CD4-positive, alpha-beta T cell (primary cell): ENCODE measurements at regions of chr6 and their contacts with region 1.

Region 1: GRCh38 chr6:119110601-119111548 is 32.4 kb upstream of the FAM184A start:
- DNase-seq: peak in 11 of 14 experiments; percentile 6 to 82 (median 26)
- ATAC-seq: peak; percentile 91
- H3K4me3 ChIP-seq: no peak overlapping the region
- H3K4me3 Mint-ChIP-seq: peak overlapping the region; percentile 30
- H3K27ac ChIP-seq: no peak overlapping the region
- H3K27ac Mint-ChIP-seq: no peak overlapping the region
- H3K4me1 ChIP-seq: peaks cover 9% of the 10 kb centered on the region
- H3K4me1 Mint-ChIP-seq: peaks cover 13% of the 10 kb centered on the region
- H3K27me3 ChIP-seq: no peaks in the 10 kb centered on the region
- H3K27me3 Mint-ChIP-seq: no peaks in the 10 kb centered on the region
- CTCF ChIP-seq: peak; percentile 72

Region 2: DNA sequence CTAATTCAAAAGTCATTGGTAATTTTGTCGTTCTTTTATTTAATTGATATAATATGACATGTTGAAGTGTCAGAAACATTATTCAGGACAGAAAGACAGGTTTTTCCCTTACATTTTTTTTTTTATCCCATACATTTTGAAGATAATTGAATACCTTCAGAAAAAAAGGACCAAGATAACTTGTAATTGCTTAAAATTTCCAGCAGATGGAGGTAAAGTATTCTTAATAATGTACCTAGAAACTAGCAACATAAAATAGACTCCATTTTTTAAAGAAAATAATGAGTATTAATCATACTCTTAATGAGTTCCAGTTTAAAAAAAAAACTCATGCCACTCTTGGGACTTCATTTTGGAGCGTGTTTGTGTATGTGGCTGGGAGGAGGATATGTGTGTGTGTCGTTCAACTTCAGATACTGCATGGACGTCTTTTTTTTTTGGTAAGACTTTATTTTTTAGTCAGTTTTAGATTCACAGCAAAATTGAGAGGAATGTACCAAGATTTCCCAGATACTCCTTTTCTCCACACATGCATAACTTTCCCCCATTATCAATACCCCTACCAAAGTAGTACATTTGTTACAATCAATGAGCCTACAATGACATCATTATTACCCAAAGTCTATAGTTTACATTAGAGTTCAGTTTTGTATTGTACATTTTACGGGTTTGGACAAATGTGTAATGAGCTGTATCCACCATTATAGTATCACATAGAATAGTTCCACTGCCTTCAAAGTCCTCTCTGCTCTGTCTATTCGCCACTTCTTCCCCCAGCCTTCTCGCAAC is 1764.5 kb before region 1 on chr6:
- CTCF ChIA-PET with region 1: no interaction called
- POLR2A ChIA-PET with region 1: no interaction called
- intact Hi-C with region 1: loop called in 1 of 2 experiments (anchors 10 kb)
- DNase-seq: peak in 3 of 14 experiments; percentile 16 to 30 (median 19)
- ATAC-seq: no peak
- H3K4me3 ChIP-seq: no peak overlapping the region
- H3K4me3 Mint-ChIP-seq: no peak overlapping the region
- H3K27ac ChIP-seq: no peak overlapping the region
- H3K27ac Mint-ChIP-seq: no peak overlapping the region
- H3K4me1 ChIP-seq: no peaks in the 10 kb centered on the region
- H3K4me1 Mint-ChIP-seq: no peaks in the 10 kb centered on the region
- H3K27me3 ChIP-seq: peaks cover 0 to 4% of the 10 kb centered on the region in 2 experiments
- H3K27me3 Mint-ChIP-seq: peaks cover 4% of the 10 kb centered on the region
- CTCF ChIP-seq: peak; percentile 65

Region 3: GRCh38 chr6:118283766-118284165 is 827.1 kb before region 1 on chr6:
- CTCF ChIA-PET with region 1: no interaction called
- POLR2A ChIA-PET with region 1: no interaction called
- intact Hi-C with region 1: loop called (anchors 1 to 2 kb)
- DNase-seq: peak in 13 of 14 experiments; percentile 9 to 74 (median 38)
- ATAC-seq: peak; percentile 59
- H3K4me3 ChIP-seq: no peak overlapping the region
- H3K4me3 Mint-ChIP-seq: no peak overlapping the region
- H3K27ac ChIP-seq: no peak overlapping the region
- H3K27ac Mint-ChIP-seq: no peak overlapping the region
- H3K4me1 ChIP-seq: no peaks in the 10 kb centered on the region
- H3K4me1 Mint-ChIP-seq: no peaks in the 10 kb centered on the region
- H3K27me3 ChIP-seq: no peaks in the 10 kb centered on the region
- H3K27me3 Mint-ChIP-seq: peaks cover 11% of the 10 kb centered on the region
- CTCF ChIP-seq: peak; percentile 67

Region 4: DNA sequence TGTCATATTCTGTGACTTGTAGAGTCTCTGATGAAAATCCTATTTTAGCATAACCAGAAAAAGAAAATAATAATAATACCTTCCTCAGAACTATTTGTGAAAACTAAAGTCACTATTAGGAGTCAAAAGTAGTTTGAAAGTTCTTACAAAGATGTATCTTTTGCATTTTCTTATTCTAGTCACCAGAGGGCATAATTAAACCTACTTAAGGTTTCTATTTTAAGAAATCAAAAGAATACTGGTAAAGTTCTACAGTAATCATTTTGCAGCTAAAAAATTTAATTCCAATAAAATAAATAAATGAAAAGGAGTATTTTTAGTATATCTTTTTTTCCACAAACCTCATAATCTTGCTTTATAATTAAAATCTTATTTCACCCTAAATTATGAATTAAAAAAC is 147.9 kb before region 1 on chr6:
- CTCF ChIA-PET with region 1: interaction called, 15 read pairs
- POLR2A ChIA-PET with region 1: interaction called, 16 read pairs
- intact Hi-C with region 1: loop called (anchors 1 kb)
- DNase-seq: peak in 3 of 14 experiments; percentile 15 to 30 (median 20)
- ATAC-seq: no peak
- H3K4me3 ChIP-seq: no peak overlapping the region
- H3K4me3 Mint-ChIP-seq: no peak overlapping the region
- H3K27ac ChIP-seq: no peak overlapping the region
- H3K27ac Mint-ChIP-seq: no peak overlapping the region
- H3K4me1 ChIP-seq: no peaks in the 10 kb centered on the region
- H3K4me1 Mint-ChIP-seq: peaks cover 8% of the 10 kb centered on the region
- H3K27me3 ChIP-seq: no peaks in the 10 kb centered on the region
- H3K27me3 Mint-ChIP-seq: no peaks in the 10 kb centered on the region
- CTCF ChIP-seq: peak; percentile 55

Region 5: GRCh38 chr6:119052292-119052889 is 58.5 kb before region 1 on chr6:
- CTCF ChIA-PET with region 1: interaction called, 3 read pairs
- POLR2A ChIA-PET with region 1: no interaction called
- intact Hi-C with region 1: loop called in 1 of 2 experiments (anchors 1 kb)
- DNase-seq: peak in 3 of 14 experiments; percentile 19 to 24 (median 20)
- ATAC-seq: peak; percentile 55
- H3K4me3 ChIP-seq: no peak overlapping the region
- H3K4me3 Mint-ChIP-seq: no peak overlapping the region
- H3K27ac ChIP-seq: no peak overlapping the region
- H3K27ac Mint-ChIP-seq: peak overlapping the region; percentile 28
- H3K4me1 ChIP-seq: peaks cover 4% of the 10 kb centered on the region
- H3K4me1 Mint-ChIP-seq: peaks cover 29% of the 10 kb centered on the region
- H3K27me3 ChIP-seq: no peaks in the 10 kb centered on the region
- H3K27me3 Mint-ChIP-seq: no peaks in the 10 kb centered on the region
- CTCF ChIP-seq: no peak

Region 6: GRCh38 chr6:119148825-119149525 is 38.1 kb after region 1 on chr6:
- CTCF ChIA-PET with region 1: no interaction called
- POLR2A ChIA-PET with region 1: no interaction called
- intact Hi-C with region 1: no loop called
- DNase-seq: no peak
- ATAC-seq: no peak
- H3K4me3 ChIP-seq: no peak overlapping the region
- H3K4me3 Mint-ChIP-seq: no peak overlapping the region
- H3K27ac ChIP-seq: no peak overlapping the region
- H3K27ac Mint-ChIP-seq: no peak overlapping the region
- H3K4me1 ChIP-seq: peaks cover 13% of the 10 kb centered on the region
- H3K4me1 Mint-ChIP-seq: peaks cover 16% of the 10 kb centered on the region
- H3K27me3 ChIP-seq: no peaks in the 10 kb centered on the region
- H3K27me3 Mint-ChIP-seq: no peaks in the 10 kb centered on the region
- CTCF ChIP-seq: no peak